Right cardiac atrium (tissue), 5 donors: ENCODE measurements at regions of chr10 and their contacts with region 1.

Region 1: GRCh38 chr10:4656576-4657182 is 169.3 kb upstream of the AKR1E2 start:
- DNase-seq: peak in 2 of 3 donors; percentile 54 to 70
- ATAC-seq: peak in 1 of 2 donors; percentile 62
- H3K4me3 ChIP-seq: no peak overlapping the region
- H3K27ac ChIP-seq: no peak overlapping the region
- H3K4me1 ChIP-seq: no peaks in the 10 kb centered on the region
- H3K27me3 ChIP-seq: no peaks in the 10 kb centered on the region

Region 2: GRCh38 chr10:4081685-4082111 is 575.0 kb before region 1 on chr10:
- intact Hi-C with region 1: loop called in 1 of 4 experiments (anchors 10 kb)
- DNase-seq: peak; percentile 50 to 84 (median 76)
- ATAC-seq: peak; percentile 65 to 70
- H3K4me3 ChIP-seq: no peak overlapping the region
- H3K27ac ChIP-seq: peak overlapping the region; percentile 50
- H3K4me1 ChIP-seq: peaks cover 13% of the 10 kb centered on the region
- H3K27me3 ChIP-seq: no peaks in the 10 kb centered on the region

Region 3: GRCh38 chr10:4333459-4333894 is 323.2 kb before region 1 on chr10:
- intact Hi-C with region 1: loop called in 1 of 4 experiments (anchors 10 kb)
- DNase-seq: no peak
- ATAC-seq: no peak
- H3K4me3 ChIP-seq: no peak overlapping the region
- H3K27ac ChIP-seq: no peak overlapping the region
- H3K4me1 ChIP-seq: peaks cover 2% of the 10 kb centered on the region
- H3K27me3 ChIP-seq: no peaks in the 10 kb centered on the region

Region 4: GRCh38 chr10:4384245-4384644 is 272.4 kb before region 1 on chr10:
- intact Hi-C with region 1: loop called in 1 of 4 experiments (anchors 10 kb)
- DNase-seq: no peak
- ATAC-seq: no peak
- H3K4me3 ChIP-seq: no peak overlapping the region
- H3K27ac ChIP-seq: no peak overlapping the region
- H3K4me1 ChIP-seq: no peaks in the 10 kb centered on the region
- H3K27me3 ChIP-seq: no peaks in the 10 kb centered on the region

Region 5: DNA sequence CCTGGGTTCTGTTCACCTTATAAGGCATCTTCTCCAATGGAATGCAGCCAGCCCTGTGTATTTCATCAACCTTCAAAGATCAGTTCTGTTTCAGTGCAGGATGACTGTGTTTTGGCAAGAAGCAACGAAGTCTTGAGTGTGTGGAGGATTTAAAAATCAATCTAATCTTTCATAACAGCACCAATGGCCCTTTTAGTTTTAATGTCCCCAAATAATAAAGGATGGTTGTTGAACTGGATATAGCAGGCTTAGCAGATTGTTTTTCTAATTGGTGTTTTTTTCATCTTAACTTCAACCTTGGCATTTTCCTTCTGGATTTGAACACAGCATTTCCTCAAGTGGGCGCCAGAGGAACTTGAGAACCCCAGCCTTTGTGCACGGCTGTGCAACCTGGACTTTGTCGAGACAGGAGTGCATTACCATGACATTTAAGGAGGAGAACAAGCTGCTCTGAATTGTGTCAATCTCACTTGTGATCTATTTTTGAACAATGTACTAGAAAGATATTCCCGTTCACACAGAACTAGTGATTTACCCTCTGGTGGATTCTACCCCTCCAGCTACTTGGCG is 143.9 kb before region 1 on chr10:
- intact Hi-C with region 1: loop called in 3 of 4 experiments (anchors 5 to 10 kb)
- DNase-seq: peak; percentile 49 to 83 (median 66)
- ATAC-seq: peak; percentile 74 to 77
- H3K4me3 ChIP-seq: no peak overlapping the region
- H3K27ac ChIP-seq: no peak overlapping the region
- H3K4me1 ChIP-seq: peaks cover 5% of the 10 kb centered on the region
- H3K27me3 ChIP-seq: no peaks in the 10 kb centered on the region

Region 6: DNA sequence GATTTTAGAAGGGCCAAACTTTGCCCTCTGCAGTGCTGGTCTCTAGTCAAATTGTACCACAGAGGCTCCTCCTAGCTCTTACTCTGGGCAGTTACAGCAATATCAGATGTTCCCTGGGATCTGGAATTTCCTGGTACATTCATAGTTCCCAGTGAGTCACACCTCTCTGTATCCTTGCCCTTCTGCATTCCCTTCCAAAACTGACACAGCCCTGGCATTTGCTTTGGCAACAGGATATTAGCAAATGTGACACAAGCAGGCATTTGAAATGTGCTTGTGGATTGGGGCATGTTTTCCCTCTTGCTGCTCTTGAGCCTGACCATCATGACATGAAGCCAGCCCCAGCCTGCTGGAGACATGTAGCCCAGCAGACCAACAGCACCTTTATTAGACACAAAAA is 115.4 kb before region 1 on chr10:
- intact Hi-C with region 1: no loop called
- DNase-seq: peak in 1 of 3 donors; percentile 37
- ATAC-seq: peak; percentile 42 to 68
- H3K4me3 ChIP-seq: no peak overlapping the region
- H3K27ac ChIP-seq: peak overlapping the region; percentile 12
- H3K4me1 ChIP-seq: peaks cover 2% of the 10 kb centered on the region
- H3K27me3 ChIP-seq: no peaks in the 10 kb centered on the region

Region 7: DNA sequence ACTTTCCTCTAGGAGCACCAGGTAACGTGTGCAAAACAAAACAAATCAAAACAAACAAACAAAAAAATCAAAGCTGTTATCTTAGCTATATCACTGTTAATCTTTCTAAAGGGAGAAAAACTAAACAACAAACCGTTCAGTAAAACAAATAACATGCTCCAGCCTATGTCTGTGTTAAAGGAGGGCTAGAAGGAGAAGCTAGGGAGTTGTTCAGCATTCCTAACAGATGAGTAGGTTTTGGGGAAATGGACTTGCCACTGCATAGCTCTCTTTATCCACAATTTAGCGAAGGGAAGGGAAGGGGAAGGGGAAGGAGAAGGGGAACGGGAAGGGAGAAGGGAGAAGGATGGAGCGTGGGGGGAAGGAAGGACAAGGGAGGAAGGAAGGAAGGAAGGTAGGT is 35.1 kb after region 1 on chr10:
- intact Hi-C with region 1: no loop called
- DNase-seq: no peak
- ATAC-seq: no peak
- H3K4me3 ChIP-seq: no peak overlapping the region
- H3K27ac ChIP-seq: no peak overlapping the region
- H3K4me1 ChIP-seq: peaks cover 3% of the 10 kb centered on the region
- H3K27me3 ChIP-seq: no peaks in the 10 kb centered on the region

Region 8: GRCh38 chr10:5023177-5023805 is 366.6 kb after region 1 on chr10:
- intact Hi-C with region 1: no loop called
- DNase-seq: no peak
- ATAC-seq: no peak
- H3K4me3 ChIP-seq: no peak overlapping the region
- H3K27ac ChIP-seq: no peak overlapping the region
- H3K4me1 ChIP-seq: peaks cover 4% of the 10 kb centered on the region
- H3K27me3 ChIP-seq: no peaks in the 10 kb centered on the region